Activated naive CD4-positive, alpha-beta T cell treated with anti-CD3 and anti-CD28 coated beads for 36 hours (primary cell): ENCODE measurements at regions of chr10 and their contacts with region 1.

Region 1: GRCh38 chr10:89296220-89296648 is 5.6 kb upstream of the IFIT2 start:
- DNase-seq: no peak
- H3K4me3 Mint-ChIP-seq: no peak overlapping the region
- H3K27ac Mint-ChIP-seq: no peak overlapping the region
- H3K4me1 Mint-ChIP-seq: peaks cover 17% of the 10 kb centered on the region
- H3K27me3 Mint-ChIP-seq: no peaks in the 10 kb centered on the region

Region 2: GRCh38 chr10:89327784-89328441 is 31.7 kb after region 1 on chr10 and contains the start of gene IFIT3:
- CTCF ChIA-PET with region 1: no interaction called
- intact Hi-C with region 1: loop called (anchors 1 kb)
- DNase-seq: peak; percentile 39
- H3K4me3 Mint-ChIP-seq: peak within 1 kb of the TSS; percentile 67
- H3K27ac Mint-ChIP-seq: peak within 1 kb of the TSS; percentile 17
- H3K4me1 Mint-ChIP-seq: peaks cover 39% of the 10 kb centered on the region
- H3K27me3 Mint-ChIP-seq: peaks cover 2% of the 10 kb centered on the region
- total RNA-seq, gene IFIT3: 13.9 to 14.4 TPM

Region 3: DNA sequence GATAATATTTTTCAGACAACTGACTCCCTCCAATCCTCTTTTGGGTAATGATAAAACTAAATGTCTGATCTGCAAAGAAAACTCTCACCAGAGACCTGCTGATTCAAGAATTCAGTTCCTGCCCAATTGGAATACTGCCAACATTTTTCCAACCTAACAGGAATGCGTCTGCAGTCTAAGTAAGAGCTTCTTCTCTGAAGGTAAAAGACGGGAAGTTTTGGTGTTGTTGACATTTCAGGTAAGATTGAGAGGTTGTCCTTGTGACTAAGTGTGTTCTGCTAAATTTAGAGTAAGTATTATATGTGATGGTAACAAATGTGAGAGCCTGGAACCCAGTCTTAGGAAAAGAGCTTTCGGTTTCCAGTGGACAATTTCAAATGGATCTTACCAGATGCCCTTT is 135.7 kb after region 1 on chr10:
- CTCF ChIA-PET with region 1: no interaction called
- intact Hi-C with region 1: no loop called
- DNase-seq: no peak
- H3K4me3 Mint-ChIP-seq: no peak overlapping the region
- H3K27ac Mint-ChIP-seq: no peak overlapping the region
- H3K4me1 Mint-ChIP-seq: no peaks in the 10 kb centered on the region
- H3K27me3 Mint-ChIP-seq: peaks cover 12% of the 10 kb centered on the region

Region 4: DNA sequence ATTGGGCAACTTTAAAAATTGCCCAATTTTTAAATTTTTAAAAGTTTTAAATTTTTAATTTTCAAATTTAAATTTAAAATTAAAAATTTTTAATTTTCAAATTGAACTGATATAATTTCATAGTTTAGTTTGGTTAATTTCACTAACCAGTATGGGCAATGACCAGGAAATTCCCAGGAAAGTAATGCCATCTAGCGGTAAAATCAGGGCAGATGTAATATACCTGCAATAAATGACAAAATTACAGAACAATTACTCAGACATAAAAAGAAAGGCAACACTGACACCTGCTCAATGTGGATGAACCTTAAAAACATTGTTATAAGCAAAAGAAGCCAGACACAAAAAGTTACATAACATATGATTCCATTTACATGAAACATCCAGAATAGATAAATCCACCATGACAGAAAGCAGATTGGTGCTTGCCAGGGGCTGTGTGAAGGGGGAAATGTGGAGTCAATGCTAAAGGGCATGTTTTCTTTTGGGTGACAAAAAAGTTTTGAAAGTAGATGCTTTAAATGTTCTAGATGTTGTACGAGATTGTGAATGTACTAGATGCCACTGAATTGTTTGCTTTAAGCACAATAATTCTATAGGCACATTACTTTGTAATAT is 267.7 kb after region 1 on chr10:
- CTCF ChIA-PET with region 1: no interaction called
- intact Hi-C with region 1: loop called (anchors 10 kb)
- DNase-seq: peak; percentile 27
- H3K4me3 Mint-ChIP-seq: no peak overlapping the region
- H3K27ac Mint-ChIP-seq: no peak overlapping the region
- H3K4me1 Mint-ChIP-seq: no peaks in the 10 kb centered on the region
- H3K27me3 Mint-ChIP-seq: peaks cover 8% of the 10 kb centered on the region

Region 5: GRCh38 chr10:89580243-89580642 is 284.0 kb after region 1 on chr10:
- CTCF ChIA-PET with region 1: no interaction called
- intact Hi-C with region 1: no loop called
- DNase-seq: no peak
- H3K4me3 Mint-ChIP-seq: no peak overlapping the region
- H3K27ac Mint-ChIP-seq: no peak overlapping the region
- H3K4me1 Mint-ChIP-seq: no peaks in the 10 kb centered on the region
- H3K27me3 Mint-ChIP-seq: no peaks in the 10 kb centered on the region